Right ventricle myocardium superior (tissue), 1 donor: ENCODE measurements at regions of chr5 and their contacts with region 1.

Region 1: GRCh38 chr5:42889311-42889933 is 77.7 kb upstream of the SELENOP start:
- DNase-seq: peak; percentile 67
- ATAC-seq: peak; percentile 94

Region 2: DNA sequence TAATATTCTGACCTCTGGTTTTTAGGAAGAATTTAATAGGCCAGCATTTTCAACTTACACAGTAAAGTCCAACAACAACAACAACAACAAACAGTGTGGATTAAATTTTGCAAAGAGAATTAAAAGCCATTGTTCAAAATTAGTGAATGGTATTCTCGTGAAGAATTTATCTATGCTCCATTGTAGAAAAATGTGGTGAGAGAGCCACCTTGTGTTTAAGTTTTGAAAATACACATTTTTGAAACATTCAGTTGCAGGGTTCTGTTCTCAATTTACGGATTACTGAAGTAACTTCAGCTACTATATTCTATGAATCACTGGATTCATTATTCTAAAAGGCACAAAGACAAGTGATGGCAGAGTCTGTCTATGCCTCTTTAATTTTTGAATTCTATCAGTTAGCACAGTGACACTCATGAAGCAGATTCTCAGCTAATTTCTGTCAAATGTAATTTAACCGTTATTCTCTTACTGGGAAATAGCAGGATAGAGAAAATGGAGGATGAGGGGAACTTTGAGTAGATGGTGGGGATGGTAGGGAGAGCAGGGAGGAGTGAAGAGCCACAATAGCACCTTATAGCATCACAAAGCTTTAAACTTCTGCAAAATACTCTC is 121.8 kb before region 1 on chr5:
- intact Hi-C with region 1: loop called (anchors 10 kb)
- DNase-seq: no peak
- ATAC-seq: peak; percentile 55

Region 3: GRCh38 chr5:42807722-42808447 is 81.5 kb before region 1 on chr5:
- intact Hi-C with region 1: loop called (anchors 5 kb)
- DNase-seq: no peak
- ATAC-seq: peak; percentile 38